Calu3 (cell line): ENCODE measurements at regions of chr3 and their contacts with region 1.

Region 1: DNA sequence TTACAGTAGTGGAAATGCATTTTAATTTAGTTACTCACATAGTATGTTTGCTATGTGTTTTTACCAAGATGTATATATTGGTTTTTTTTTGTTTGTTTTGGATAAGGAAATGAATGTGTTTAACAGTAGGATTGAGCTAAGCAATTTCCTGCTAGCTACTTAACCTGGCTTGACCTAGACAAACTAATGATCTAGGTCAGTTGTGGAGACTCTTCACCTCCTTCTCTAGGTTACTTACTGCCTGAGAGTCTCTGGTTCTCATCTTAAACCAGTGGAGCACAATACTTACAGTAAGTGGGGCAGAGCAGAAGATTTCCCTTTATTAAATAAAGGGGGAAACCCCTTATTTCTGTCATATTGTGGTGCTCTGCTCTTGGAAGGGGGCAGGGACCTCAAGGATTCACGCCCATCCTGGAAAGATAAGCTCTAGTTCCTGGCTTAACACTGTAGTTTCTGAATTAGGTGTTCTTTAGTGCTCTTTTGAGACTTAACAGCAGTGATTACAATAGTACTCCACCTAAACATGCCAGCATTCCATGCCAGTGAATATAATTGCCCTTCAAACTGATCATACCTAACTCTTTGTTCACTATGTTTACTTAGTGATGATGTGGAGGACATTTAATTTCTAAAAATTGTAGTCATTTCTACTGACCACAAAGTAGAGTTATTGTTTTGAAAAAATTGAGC is 79.9 kb downstream of the UBP1 start:
- DNase-seq: peak; percentile 40
- H3K4me3 Mint-ChIP-seq: peak overlapping the region; percentile 24
- H3K27ac Mint-ChIP-seq: peak overlapping the region; percentile 76
- H3K4me1 Mint-ChIP-seq: peaks cover 17% of the 10 kb centered on the region
- H3K27me3 Mint-ChIP-seq: no peaks in the 10 kb centered on the region
- CTCF ChIP-seq: no peak

Region 2: DNA sequence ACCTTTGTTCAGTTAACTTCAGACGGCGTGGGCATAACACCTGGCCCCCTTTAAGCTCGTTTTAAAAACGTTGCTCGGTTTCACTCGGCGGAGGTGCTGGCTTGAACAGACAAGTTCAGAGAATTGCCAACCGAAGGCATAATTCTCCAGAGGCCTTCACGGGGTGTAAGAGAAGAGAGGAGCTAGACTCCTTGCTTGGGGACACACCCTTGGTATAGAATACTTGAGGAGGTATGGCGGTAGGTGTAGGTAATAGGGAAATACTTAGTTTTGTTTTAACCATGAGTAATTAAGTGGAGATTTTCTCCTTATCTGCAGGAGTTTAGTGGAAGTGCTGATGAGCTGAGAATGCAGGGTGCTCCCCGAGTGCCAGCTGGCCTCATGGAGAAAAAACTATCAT is 82.1 kb before region 1 on chr3:
- CTCF ChIA-PET with region 1: no interaction called
- intact Hi-C with region 1: loop called (anchors 2 kb)
- DNase-seq: no peak
- H3K4me3 Mint-ChIP-seq: peak overlapping the region; percentile 78
- H3K27ac Mint-ChIP-seq: peak overlapping the region; percentile 78
- H3K4me1 Mint-ChIP-seq: no peaks in the 10 kb centered on the region
- H3K27me3 Mint-ChIP-seq: no peaks in the 10 kb centered on the region
- CTCF ChIP-seq: no peak

Region 3: GRCh38 chr3:33318709-33319380 is 41.4 kb before region 1 on chr3:
- CTCF ChIA-PET with region 1: no interaction called
- intact Hi-C with region 1: loop called (anchors 5 kb)
- DNase-seq: no peak
- H3K4me3 Mint-ChIP-seq: no peak overlapping the region
- H3K27ac Mint-ChIP-seq: no peak overlapping the region
- H3K4me1 Mint-ChIP-seq: peaks cover 40% of the 10 kb centered on the region
- H3K27me3 Mint-ChIP-seq: no peaks in the 10 kb centered on the region
- CTCF ChIP-seq: no peak